ENCODE measurements at regions of chr17 and their contacts with region 1.

Region 1: DNA sequence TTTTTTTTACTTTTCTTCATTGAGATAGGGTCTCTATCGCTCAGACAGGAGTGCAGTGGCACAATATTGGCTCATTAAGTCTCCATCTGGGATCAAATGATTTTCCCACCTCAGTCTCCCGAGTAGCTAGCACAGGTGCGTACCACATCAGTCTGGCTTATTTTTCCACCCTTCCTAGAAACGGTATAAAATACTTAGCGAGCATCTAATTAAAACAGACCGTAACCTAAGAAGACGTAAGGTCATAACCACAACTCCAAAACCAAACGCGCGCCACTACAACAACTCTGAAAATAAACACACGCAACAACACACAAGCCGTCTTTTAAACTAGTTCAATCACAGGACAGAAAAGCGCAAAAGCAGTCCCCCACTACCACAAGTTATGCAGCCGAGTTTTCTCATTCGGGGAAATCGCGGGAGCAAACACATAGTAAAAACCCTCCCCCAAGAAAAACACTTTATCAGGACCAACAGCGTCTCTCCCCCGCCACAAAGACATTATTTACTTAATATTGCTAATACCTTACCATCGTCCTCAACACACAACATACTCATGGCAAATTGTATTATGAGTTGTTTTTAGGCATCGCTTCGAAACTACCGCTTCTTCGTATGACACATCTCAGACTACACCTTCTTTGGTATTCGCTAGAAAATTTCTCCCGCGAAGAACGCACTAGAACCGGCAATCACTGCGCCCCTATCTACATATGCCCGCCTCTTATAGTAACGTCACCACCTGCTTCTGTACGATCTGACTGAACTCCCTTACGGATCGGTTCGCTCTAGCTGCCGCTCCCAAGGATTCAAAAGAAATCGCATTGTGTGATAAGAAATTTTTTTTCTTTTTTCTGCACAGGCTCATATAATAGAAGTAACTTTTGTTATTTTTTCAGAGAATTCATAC is 32.8 kb downstream of the TEX14 start:
- H3K4me3 ChIP-seq: peak overlapping the region; percentile 25
- H3K27ac ChIP-seq: peak overlapping the region; percentile 97
- H3K4me1 ChIP-seq: no peaks in the 10 kb centered on the region
- CTCF ChIP-seq: no peak

Region 2: DNA sequence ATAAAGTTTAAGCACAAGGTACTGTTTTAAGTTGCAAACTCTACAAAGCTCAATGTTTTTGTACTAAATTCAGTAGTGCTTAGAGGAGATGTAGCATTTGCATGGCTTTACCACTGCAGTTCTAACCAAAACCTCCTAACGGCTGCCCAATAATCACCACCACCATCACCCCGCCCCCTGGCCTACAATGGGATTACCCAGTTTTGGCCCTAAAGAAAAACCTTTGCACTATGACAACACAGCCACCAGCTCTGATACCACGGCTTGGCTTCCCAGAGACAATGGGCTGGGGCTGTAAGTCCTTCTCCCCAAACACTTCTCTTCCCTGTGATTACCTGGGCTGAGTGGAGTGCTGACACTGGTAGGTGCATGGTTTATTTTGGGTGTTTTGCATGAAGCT is 86.2 kb before region 1 on chr17:
- CTCF ChIA-PET with region 1: no interaction called
- POLR2A ChIA-PET with region 1: no interaction called
- H3K4me3 ChIP-seq: no peak overlapping the region
- H3K27ac ChIP-seq: no peak overlapping the region
- H3K4me1 ChIP-seq: peaks cover 3% of the 10 kb centered on the region; the same call in 1 of the 2 replicates
- CTCF ChIP-seq: no peak

Region 3: DNA sequence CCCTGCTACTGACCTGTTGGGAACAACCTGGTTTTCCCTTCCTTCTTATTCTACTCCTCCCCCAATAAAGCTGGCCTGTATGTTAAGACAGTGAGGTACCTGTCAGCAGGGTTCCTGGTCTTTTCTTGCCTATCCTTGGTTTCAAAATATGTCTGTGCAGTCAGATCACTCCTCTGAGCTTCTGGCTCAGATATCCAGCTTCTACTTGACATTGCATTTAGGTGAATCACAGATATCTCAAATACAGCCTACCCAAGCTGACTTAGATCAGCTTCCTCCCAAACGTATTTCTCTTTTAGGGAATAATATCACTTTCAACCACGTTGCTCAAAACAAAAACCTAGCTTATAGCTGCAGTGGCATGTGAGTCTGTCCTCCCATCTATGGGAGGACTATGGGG is 15.9 kb before region 1 on chr17:
- CTCF ChIA-PET with region 1: no interaction called
- POLR2A ChIA-PET with region 1: interaction called, 11 read pairs
- H3K4me3 ChIP-seq: no peak overlapping the region
- H3K27ac ChIP-seq: no peak overlapping the region
- H3K4me1 ChIP-seq: no peaks in the 10 kb centered on the region
- CTCF ChIP-seq: no peak

Region 4: DNA sequence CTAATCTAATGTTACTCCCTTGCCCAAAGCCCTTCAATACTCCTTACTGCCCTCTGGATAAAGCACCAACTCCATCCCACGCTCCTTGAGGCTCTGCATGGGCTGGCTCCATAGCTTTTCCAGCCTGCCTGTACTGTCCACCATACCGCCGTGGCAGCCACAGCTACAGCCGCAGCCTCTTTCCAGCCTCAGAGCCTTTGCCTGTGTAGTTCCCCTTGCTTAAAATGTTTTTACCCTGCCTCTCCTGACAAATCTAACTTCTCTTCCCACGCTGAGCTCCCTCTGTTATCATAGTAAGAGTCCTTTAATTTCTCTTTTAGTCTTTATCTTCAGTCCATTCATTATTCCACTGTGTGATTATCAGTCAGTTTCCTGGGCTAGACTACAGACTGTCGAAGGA is 10.8 kb after region 1 on chr17:
- CTCF ChIA-PET with region 1: no interaction called
- POLR2A ChIA-PET with region 1: interaction called, 17 read pairs
- H3K4me3 ChIP-seq: no peak overlapping the region
- H3K27ac ChIP-seq: no peak overlapping the region
- H3K4me1 ChIP-seq: no peaks in the 10 kb centered on the region
- CTCF ChIP-seq: no peak

Region 5: GRCh38 chr17:58692239-58693055 is 33.4 kb after region 1 on chr17 and contains the start of gene RAD51C:
- CTCF ChIA-PET with region 1: interaction called, 6 read pairs
- POLR2A ChIA-PET with region 1: interaction called, 11 read pairs
- H3K4me3 ChIP-seq: peak within 1 kb of the TSS; percentile 74
- H3K27ac ChIP-seq: peak within 1 kb of the TSS; percentile 96
- H3K4me1 ChIP-seq: peaks cover 16% of the 10 kb centered on the region
- CTCF ChIP-seq: no peak; the same call in 1 of the 2 replicates

Measured in HEK293 (cell line).